PC-3 (cell line): ENCODE measurements at regions of chr1 and their contacts with region 1.

Region 1: GRCh38 chr1:201295861-201296260 is 12.6 kb downstream of the PKP1 start:
- DNase-seq: peak; percentile 100
- ATAC-seq: peak; percentile 90
- H3K4me3 ChIP-seq: peak overlapping the region; percentile 3; the same call in 1 of the 2 replicates
- H3K27ac ChIP-seq: peak overlapping the region; percentile 67
- H3K4me1 ChIP-seq: peaks cover 49% of the 10 kb centered on the region
- H3K27me3 ChIP-seq: no peaks in the 10 kb centered on the region
- CTCF ChIP-seq: no peak

Region 2: GRCh38 chr1:201282931-201283829 is 12.7 kb before region 1 on chr1 and contains the start of gene PKP1:
- CTCF ChIA-PET with region 1: interaction called, 3 read pairs
- POLR2A ChIA-PET with region 1: interaction called, 5 read pairs
- intact Hi-C with region 1: loop called (anchors 1 kb)
- DNase-seq: peak; percentile 100
- ATAC-seq: peak; percentile 84
- H3K4me3 ChIP-seq: peak within 1 kb of the TSS; percentile 79
- H3K27ac ChIP-seq: peak within 1 kb of the TSS; percentile 74
- H3K4me1 ChIP-seq: peaks cover 60% of the 10 kb centered on the region
- H3K27me3 ChIP-seq: no peaks in the 10 kb centered on the region
- CTCF ChIP-seq: 0 out of 2 replicates have a peak, but pooled peaks have one; percentile 27
- total RNA-seq, gene PKP1: 211 and 259 TPM in 2 replicates